ENCODE measurements at regions of chr13 and their contacts with region 1.

Region 1: GRCh38 chr13:55000043-55000442 is 1971.4 kb downstream of the OLFM4 start:
- DNase-seq: no peak
- H3K4me3 ChIP-seq: no peak overlapping the region
- H3K27ac ChIP-seq: no peak overlapping the region
- H3K4me1 ChIP-seq: no peaks in the 10 kb centered on the region
- H3K27me3 ChIP-seq: no peaks in the 10 kb centered on the region
- CTCF ChIP-seq: no peak
- EP300 ChIP-seq: no peak
- POLR2A ChIP-seq: no peak

Region 2: GRCh38 chr13:55038230-55038629 is 38.2 kb after region 1 on chr13:
- intact Hi-C with region 1: loop called (anchors 2 kb)
- DNase-seq: no peak
- H3K4me3 ChIP-seq: no peak overlapping the region
- H3K27ac ChIP-seq: no peak overlapping the region
- H3K4me1 ChIP-seq: no peaks in the 10 kb centered on the region
- H3K27me3 ChIP-seq: no peaks in the 10 kb centered on the region
- CTCF ChIP-seq: no peak
- EP300 ChIP-seq: no peak
- POLR2A ChIP-seq: no peak

Measured in esophagus muscularis mucosa (tissue), 4 donors.